A673 (cell line): ENCODE measurements at regions of chr5 and their contacts with region 1.

Region 1: GRCh38 chr5:68962757-68963484 is 130.9 kb upstream of the SLC30A5 start:
- DNase-seq: peak; percentile 71
- H3K4me3 ChIP-seq: no peak overlapping the region
- H3K27ac ChIP-seq: peak overlapping the region; percentile 27
- H3K4me1 ChIP-seq: peaks cover 5% of the 10 kb centered on the region
- H3K27me3 ChIP-seq: no peaks in the 10 kb centered on the region
- CTCF ChIP-seq: peak; percentile 91

Region 2: DNA sequence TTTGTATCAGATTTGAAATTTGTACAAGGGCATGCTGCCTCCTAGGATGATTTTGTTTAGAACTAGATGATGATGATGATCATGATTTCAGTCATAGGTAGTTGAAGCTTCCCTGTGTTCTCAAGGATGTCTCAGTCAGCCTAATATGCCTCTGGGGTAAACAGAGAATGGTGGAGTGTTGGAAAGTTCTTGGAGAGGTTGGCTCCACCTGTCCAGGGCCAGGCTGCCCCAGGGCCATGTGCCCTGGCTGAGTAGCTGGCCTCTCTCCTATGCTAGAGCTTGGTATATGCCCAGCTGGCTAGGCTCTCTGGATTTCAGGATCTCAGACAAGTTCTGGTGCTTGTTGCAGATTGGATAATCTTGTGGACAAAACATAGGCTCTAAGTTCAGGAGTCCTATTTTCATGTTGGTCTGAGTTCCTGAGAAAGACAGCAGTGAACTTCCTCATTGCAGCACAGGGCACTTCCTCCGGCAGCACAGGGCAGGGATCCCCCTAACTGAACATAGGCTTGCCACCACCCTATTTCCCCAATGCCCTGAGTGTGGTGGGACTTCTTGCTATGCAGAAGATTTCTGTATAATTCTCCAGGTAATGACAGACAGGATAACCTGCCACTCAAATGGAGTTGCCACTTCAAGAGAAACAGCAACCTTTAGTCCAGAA is 527.4 kb before region 1 on chr5:
- CTCF ChIA-PET with region 1: no interaction called
- POLR2A ChIA-PET with region 1: no interaction called
- intact Hi-C with region 1: no loop called
- DNase-seq: no peak
- H3K4me3 ChIP-seq: no peak overlapping the region
- H3K27ac ChIP-seq: no peak overlapping the region
- H3K4me1 ChIP-seq: peaks cover 6% of the 10 kb centered on the region
- H3K27me3 ChIP-seq: no peaks in the 10 kb centered on the region
- CTCF ChIP-seq: no peak

Region 3: GRCh38 chr5:68818057-68818695 is 144.7 kb before region 1 on chr5:
- CTCF ChIA-PET with region 1: no interaction called
- POLR2A ChIA-PET with region 1: no interaction called
- intact Hi-C with region 1: no loop called
- DNase-seq: no peak
- H3K4me3 ChIP-seq: no peak overlapping the region
- H3K27ac ChIP-seq: no peak overlapping the region
- H3K4me1 ChIP-seq: no peaks in the 10 kb centered on the region
- H3K27me3 ChIP-seq: no peaks in the 10 kb centered on the region
- CTCF ChIP-seq: no peak

Region 4: DNA sequence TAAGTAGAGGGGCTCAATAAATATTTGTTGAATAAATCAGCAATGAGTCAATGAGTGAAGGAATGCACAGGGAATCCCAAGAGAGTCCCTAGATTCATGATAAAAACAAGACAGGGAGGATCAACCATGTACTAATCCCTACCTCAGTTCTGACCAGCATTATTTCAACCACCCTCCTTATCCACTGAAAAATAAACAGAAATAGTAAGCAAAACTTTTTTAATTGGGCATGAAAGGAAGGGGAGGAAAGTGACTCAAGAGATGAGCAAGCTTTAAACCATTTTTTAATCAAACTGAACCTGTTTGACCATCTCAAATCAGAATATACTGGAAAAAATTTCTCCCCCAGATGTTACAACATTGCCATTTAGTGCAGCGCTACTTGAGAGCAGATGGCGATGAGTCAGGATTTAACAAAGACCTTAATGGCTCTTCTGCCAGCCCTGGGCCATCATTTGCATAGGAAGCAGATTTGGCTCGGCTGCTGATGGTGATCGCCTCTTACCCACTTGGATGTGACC is 63.9 kb before region 1 on chr5:
- CTCF ChIA-PET with region 1: no interaction called
- POLR2A ChIA-PET with region 1: no interaction called
- intact Hi-C with region 1: loop called (anchors 2 kb)
- DNase-seq: peak; percentile 90
- H3K4me3 ChIP-seq: no peak overlapping the region
- H3K27ac ChIP-seq: no peak overlapping the region
- H3K4me1 ChIP-seq: peaks cover 4% of the 10 kb centered on the region
- H3K27me3 ChIP-seq: no peaks in the 10 kb centered on the region
- CTCF ChIP-seq: no peak